ENCODE measurements at regions of chr6 and their contacts with region 1.

Region 1: GRCh38 chr6:13696226-13696625 is 15.4 kb downstream of the RANBP9 start:
- DNase-seq: no peak
- ATAC-seq: no peak
- H3K4me3 Mint-ChIP-seq: no peak overlapping the region
- H3K27ac Mint-ChIP-seq: peak overlapping the region; percentile 44
- H3K4me1 Mint-ChIP-seq: peaks cover 51% of the 10 kb centered on the region
- H3K27me3 Mint-ChIP-seq: no peaks in the 10 kb centered on the region

Region 2: DNA sequence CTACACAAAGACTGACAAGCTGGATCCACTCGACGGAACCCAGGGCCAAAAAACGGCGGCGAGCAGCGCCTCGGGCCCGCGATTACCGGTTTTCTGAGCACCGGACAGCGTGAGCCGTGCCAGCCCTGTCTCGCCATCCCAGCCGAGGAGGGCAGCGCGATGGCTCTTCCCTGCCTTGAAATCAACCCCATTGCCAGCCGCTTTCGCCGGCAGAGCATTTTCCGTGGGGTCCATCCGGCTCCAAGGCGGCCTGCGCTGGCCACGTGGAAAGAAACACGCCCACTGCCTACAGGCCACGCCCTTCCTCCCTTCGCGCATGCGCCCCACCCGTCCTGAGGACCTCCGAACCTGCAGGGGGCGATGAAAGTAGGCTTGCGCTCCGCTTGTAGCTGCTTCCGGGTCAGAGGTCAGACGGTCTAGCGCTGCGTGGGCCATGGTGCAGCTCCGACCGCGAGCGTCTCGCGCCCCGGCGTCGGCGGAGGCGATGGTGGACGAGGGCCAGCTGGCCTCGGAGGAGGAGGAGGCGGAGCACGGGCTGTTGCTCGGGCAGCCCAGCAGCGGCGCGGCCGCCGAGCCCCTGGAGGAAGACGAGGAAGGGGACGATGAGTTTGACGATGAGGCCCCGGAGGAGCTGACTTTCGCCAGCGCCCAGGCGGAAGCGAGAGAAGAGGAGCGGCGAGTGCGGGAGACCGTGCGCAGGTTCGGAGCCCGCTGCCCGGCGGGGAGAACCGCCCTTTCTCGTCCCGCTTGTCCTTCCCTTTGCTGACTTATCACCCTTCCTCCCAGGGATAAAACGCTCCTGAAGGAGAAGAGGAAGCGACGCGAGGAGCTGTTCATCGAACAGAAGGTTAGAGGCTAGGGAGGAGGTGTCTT is 81.1 kb before region 1 on chr6 and contains the start of gene NOL7:
- CTCF ChIA-PET with region 1: interaction called, 20 read pairs
- DNase-seq: peak; percentile 98
- ATAC-seq: peak; percentile 92
- H3K4me3 Mint-ChIP-seq: peak within 1 kb of the TSS; percentile 96
- H3K27ac Mint-ChIP-seq: peak within 1 kb of the TSS; percentile 94
- H3K4me1 Mint-ChIP-seq: peaks cover 56% of the 10 kb centered on the region
- H3K27me3 Mint-ChIP-seq: no peaks in the 10 kb centered on the region
- total RNA-seq, gene NOL7: 56.6 to 70.9 TPM

Measured in activated CD8-positive, alpha-beta memory T cell treated with anti-CD3 and anti-CD28 coated beads, Interleukin-2, amount 10 ng/mL, durations not matched to agents 7 days and 5 days (primary cell).